ENCODE measurements at regions of chr22 and their contacts with region 1.

Region 1: DNA sequence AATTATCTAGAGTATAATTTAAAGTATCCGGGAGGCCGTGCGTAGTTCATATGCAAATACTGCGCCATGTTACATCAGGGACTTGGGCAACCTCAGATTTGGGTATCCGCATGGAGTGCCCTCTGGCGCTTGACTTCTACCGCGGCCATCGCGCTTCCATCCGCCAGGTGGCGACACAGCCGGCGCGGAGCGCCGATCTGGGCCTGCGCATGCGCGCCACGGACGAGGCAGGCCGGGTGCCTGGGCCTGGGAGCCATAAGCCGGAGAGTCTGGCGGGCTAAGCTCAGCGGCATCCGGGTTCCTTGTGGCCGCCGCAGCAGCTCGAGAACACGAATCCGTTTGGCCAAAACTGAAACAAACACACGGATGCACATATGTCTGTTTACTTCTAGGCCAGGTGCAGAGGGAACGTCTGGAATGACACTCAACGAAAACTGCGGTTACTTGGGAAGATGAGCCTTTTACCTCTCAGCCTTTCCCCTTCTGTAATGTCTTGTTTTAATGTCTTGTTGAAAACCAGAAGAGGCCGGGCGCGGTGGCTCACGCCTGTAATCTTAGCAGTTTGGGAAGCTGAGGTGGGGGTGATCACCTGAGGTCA is 21.9 kb downstream of the SNU13 start:
- DNase-seq: peak; percentile 89 to 97 (median 92)
- ATAC-seq: peak; percentile 94
- H3K4me3 ChIP-seq: peak overlapping the region; percentile 30 to 46
- H3K4me3 Mint-ChIP-seq: peak overlapping the region; percentile 84
- H3K27ac ChIP-seq: peak overlapping the region; percentile 57 to 85
- H3K27ac Mint-ChIP-seq: peak overlapping the region; percentile 96
- H3K4me1 ChIP-seq: peaks cover 9% of the 10 kb centered on the region
- H3K4me1 Mint-ChIP-seq: peaks cover 7% of the 10 kb centered on the region
- H3K27me3 ChIP-seq: no peaks in the 10 kb centered on the region
- H3K27me3 Mint-ChIP-seq: no peaks in the 10 kb centered on the region
- CTCF ChIP-seq: peak; percentile 94

Region 2: DNA sequence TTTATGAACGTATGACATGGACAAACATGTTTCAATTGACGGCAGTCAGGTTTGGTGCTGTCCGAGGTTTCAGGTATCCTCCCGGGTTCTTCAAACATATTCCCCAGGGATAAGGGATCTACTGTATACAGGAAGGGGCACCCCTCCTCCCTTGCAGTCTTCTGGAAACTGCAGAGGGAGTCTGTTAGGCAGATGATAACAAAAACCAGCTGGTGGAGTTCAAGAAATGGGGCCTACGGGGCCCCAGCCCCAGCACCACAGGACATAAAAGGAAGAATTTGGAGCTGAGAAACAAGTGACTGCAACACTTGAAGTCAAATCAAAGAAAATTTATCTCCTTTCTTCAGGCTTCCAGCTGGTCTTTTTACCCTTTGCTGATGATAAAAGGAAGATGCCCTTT is 10.2 kb before region 1 on chr22:
- CTCF ChIA-PET with region 1: interaction called, 18 read pairs
- POLR2A ChIA-PET with region 1: interaction called, 4 read pairs
- intact Hi-C with region 1: no loop called
- DNase-seq: no peak
- ATAC-seq: no peak
- H3K4me3 ChIP-seq: no peak overlapping the region
- H3K4me3 Mint-ChIP-seq: no peak overlapping the region
- H3K27ac ChIP-seq: no peak overlapping the region
- H3K27ac Mint-ChIP-seq: no peak overlapping the region
- H3K4me1 ChIP-seq: no peaks in the 10 kb centered on the region
- H3K4me1 Mint-ChIP-seq: no peaks in the 10 kb centered on the region
- H3K27me3 ChIP-seq: no peaks in the 10 kb centered on the region
- H3K27me3 Mint-ChIP-seq: no peaks in the 10 kb centered on the region
- CTCF ChIP-seq: no peak

Region 3: DNA sequence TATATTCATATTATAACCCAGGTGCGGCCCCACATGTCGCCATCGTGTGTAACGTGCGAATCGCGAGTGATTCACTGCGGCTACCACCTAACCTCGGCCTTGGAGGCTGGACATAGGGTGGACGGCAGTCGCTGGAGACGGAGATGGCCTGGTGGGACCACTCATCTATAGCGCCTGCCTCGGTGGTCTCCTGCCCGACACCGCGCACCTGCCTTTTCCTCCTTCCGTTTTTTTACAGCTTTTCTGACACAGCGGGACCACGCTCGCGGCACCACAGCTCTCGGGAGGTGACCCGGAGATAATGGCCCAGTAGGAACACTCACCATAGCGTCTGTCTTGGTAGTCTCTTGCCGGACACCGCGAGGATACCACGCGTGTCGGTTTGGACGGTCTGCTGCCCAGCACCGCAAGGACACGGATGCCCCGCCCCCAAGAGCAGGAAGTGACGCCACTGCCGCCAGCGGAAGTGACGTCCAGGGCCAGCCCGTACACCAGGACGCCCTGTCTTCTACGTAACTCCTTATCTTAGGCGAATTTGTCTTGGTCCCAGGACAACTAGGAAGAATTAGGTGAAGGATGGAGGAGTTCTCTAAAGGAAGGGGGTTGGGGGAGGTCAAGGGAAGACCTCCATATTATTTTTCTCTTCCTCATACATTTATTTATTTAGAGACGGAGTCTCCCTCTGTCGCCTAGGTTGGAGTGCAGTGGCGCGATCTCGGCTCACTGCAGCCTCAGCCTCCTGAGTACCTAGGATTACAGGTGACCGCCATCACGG is 15.5 kb after region 1 on chr22:
- CTCF ChIA-PET with region 1: interaction called, 29 read pairs
- POLR2A ChIA-PET with region 1: interaction called, 21 read pairs
- intact Hi-C with region 1: no loop called
- DNase-seq: peak; percentile 75 to 91 (median 84)
- ATAC-seq: peak; percentile 92
- H3K4me3 ChIP-seq: peak overlapping the region; percentile 73
- H3K4me3 Mint-ChIP-seq: peak overlapping the region; percentile 99
- H3K27ac ChIP-seq: peak overlapping the region; percentile 82 to 87
- H3K27ac Mint-ChIP-seq: peak overlapping the region; percentile 98
- H3K4me1 ChIP-seq: peaks cover 16% of the 10 kb centered on the region
- H3K4me1 Mint-ChIP-seq: peaks cover 38% of the 10 kb centered on the region
- H3K27me3 ChIP-seq: no peaks in the 10 kb centered on the region
- H3K27me3 Mint-ChIP-seq: no peaks in the 10 kb centered on the region
- CTCF ChIP-seq: no peak

Region 4: GRCh38 chr22:41688365-41689211 is 21.8 kb after region 1 on chr22 and contains the start of gene SNU13:
- CTCF ChIA-PET with region 1: interaction called, 29 read pairs
- POLR2A ChIA-PET with region 1: interaction called, 21 read pairs
- intact Hi-C with region 1: loop called (anchors 1 kb)
- DNase-seq: peak; percentile 84 to 97 (median 93)
- ATAC-seq: peak; percentile 92
- H3K4me3 ChIP-seq: peak within 1 kb of the TSS; percentile 90 to 96
- H3K4me3 Mint-ChIP-seq: peak within 1 kb of the TSS; percentile 90
- H3K27ac ChIP-seq: peak within 1 kb of the TSS; percentile 97
- H3K27ac Mint-ChIP-seq: peak within 1 kb of the TSS; percentile 95
- H3K4me1 ChIP-seq: peaks cover 17% of the 10 kb centered on the region
- H3K4me1 Mint-ChIP-seq: peaks cover 30% of the 10 kb centered on the region
- H3K27me3 ChIP-seq: no peaks in the 10 kb centered on the region
- H3K27me3 Mint-ChIP-seq: no peaks in the 10 kb centered on the region
- CTCF ChIP-seq: no peak
- total RNA-seq, gene SNU13: 158 to 173 TPM

Region 5: DNA sequence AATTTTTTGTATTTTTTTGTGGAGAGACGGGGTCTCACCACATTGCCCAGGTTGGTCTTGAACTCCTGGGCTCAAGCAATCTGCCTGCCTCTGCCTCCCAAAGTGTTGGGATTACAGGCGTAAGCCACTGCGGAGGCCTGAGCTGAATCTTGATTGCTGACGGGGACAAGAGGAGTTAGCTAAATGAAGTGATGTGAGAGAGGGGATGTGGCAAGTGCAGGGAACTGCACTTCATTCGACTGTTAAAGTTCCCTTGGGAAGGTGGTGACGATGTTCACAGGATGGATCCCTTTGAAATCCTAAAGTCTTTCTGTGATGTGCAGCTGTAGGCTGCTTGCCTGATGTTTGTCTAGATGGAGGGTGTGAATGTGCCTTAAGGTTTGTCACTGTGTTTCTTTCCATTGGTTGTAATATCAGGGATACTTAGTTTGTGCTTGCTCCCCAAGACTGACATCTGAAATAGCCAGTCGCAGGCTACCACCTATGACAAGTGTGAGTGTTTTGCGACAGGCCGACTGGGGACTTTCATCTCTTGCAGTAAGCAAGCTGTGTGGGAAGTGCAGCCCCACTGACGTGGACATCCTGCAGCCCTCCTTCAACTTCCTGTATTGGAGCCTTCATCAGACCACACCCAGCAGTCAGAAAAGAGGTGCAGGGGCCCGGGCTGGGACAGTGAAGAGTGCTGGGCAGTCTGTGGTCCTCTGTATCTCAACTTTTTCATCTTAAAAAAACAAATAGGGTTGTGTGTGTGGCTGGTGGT is 114.2 kb after region 1 on chr22:
- CTCF ChIA-PET with region 1: no interaction called
- POLR2A ChIA-PET with region 1: interaction called, 5 read pairs
- intact Hi-C with region 1: loop called in 1 of 2 experiments (anchors 2 kb)
- DNase-seq: peak; percentile 77 to 99 (median 90)
- ATAC-seq: peak; percentile 92
- H3K4me3 ChIP-seq: peak overlapping the region; percentile 64 to 69
- H3K4me3 Mint-ChIP-seq: peak overlapping the region; percentile 89
- H3K27ac ChIP-seq: peak overlapping the region; percentile 86
- H3K27ac Mint-ChIP-seq: peak overlapping the region; percentile 99
- H3K4me1 ChIP-seq: peaks cover 32% of the 10 kb centered on the region
- H3K4me1 Mint-ChIP-seq: peaks cover 57% of the 10 kb centered on the region
- H3K27me3 ChIP-seq: no peaks in the 10 kb centered on the region
- H3K27me3 Mint-ChIP-seq: no peaks in the 10 kb centered on the region
- CTCF ChIP-seq: no peak

Measured in CD8-positive, alpha-beta T cell (primary cell).